Heart right ventricle (tissue), 16 donors: ENCODE measurements at regions of chrX and their contacts with region 1.

Region 1: GRCh38 chrX:110412971-110413721 is 54.5 kb downstream of the RTL9 start:
- DNase-seq: peak; percentile 49 to 51
- ATAC-seq: peak; percentile 76 to 92 (median 88)
- H3K4me3 ChIP-seq: no peak overlapping the region
- H3K27ac ChIP-seq: no peak overlapping the region
- H3K4me1 ChIP-seq: peaks cover 0 to 13% (median 0%) of the 10 kb centered on the region in 9 donors
- H3K27me3 ChIP-seq: peaks cover 0 to 67% (median 0%) of the 10 kb centered on the region in 7 donors
- CTCF ChIP-seq: peak; percentile 50 to 90 (median 76)

Region 2: DNA sequence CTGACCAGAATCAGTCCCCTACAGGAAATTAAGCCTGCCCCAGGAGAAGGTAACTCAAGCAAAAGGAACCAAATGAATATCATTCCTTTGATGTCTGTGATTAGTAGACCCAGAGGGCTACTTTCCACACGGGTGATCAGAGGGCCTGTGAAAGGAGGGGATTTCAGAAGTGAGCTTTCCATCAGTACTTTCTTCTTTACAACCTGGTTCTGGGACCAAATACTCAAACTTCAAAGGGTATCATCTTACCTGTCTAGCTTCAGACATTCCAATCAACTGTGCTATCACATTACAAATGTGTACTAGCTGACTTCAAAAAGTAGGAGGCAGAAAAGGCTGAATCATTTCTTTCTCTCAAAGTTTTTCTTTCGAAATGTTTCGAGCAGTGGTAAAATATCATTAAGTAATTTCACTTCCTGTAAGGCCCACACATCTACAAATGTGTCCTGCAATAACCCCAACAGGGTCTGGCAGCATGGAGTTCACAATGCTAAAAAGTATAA is 704.0 kb before region 1 on chrX:
- intact Hi-C with region 1: loop called in 1 of 10 experiments (anchors 10 kb)
- DNase-seq: no peak
- ATAC-seq: peak in 5 of 8 donors; percentile 52 to 70 (median 67)
- H3K4me3 ChIP-seq: no peak overlapping the region
- H3K27ac ChIP-seq: peak overlapping the region in 6 of 10 donors; percentile 19 to 82 (median 64)
- H3K4me1 ChIP-seq: peaks cover 0 to 75% (median 16%) of the 10 kb centered on the region in 9 donors
- H3K27me3 ChIP-seq: peaks cover 0 to 33% (median 0%) of the 10 kb centered on the region in 7 donors
- CTCF ChIP-seq: peak in 1 of 9 donors; percentile 9